OCI-LY7 (cell line): ENCODE measurements at regions of chr2 and their contacts with region 1.

Region 1: DNA sequence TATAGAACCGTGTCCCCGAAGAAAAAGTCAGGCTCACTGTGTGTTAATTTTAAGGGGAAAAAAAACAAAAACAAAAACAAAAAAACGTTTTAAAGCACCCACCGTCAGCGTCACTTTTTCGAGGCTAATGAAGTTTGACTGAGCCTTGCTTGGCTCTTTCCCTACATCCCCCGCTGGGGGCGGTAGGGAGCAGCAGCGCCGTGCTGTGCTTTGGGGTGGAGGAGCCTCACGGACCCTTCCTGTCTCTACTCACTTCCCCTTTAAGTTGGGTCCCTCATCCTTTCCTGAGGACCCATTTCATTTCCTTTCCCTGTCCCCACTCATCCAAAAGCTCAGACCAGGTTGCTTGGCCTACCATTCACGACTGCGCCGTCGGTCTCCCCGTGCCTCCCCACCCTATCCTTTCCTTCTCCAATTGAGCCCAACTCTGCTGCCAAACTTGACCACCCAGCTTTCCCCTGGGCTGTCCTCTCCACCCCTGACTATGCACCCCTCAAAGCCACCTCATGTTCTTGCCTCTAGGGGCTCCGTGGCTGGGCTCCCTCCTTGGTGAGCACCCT is 82.7 kb upstream of the RPL31 start:
- DNase-seq: peak; percentile 30
- H3K4me3 ChIP-seq: no peak overlapping the region
- H3K27ac ChIP-seq: no peak overlapping the region
- H3K4me1 ChIP-seq: no peaks in the 10 kb centered on the region
- CTCF ChIP-seq: peak; percentile 75

Region 2: DNA sequence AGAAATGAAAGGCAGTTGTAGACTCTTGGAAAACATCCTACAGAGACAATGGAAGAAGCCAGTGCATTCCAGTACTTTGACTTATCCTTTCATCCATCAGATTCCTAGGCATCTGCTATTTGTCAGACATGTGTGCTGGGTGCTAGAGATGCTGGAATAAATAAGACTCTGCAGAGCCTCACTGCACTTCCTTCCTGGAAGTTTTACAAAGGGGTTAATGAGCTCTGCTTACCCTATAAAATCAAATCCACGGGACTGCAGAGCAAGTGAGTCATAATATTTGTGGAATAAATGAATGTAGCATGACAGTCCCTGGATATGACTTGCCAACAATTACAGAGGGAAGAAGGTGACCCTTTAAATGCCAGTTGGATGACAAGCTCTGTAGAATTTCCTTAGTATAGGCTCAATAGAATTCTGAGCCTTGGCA is 152.2 kb before region 1 on chr2:
- CTCF ChIA-PET with region 1: no interaction called
- POLR2A ChIA-PET with region 1: no interaction called
- intact Hi-C with region 1: no loop called
- DNase-seq: no peak
- H3K4me3 ChIP-seq: no peak overlapping the region
- H3K27ac ChIP-seq: no peak overlapping the region
- H3K4me1 ChIP-seq: no peaks in the 10 kb centered on the region
- CTCF ChIP-seq: no peak

Region 3: GRCh38 chr2:100936070-100936741 is 16.8 kb after region 1 on chr2:
- CTCF ChIA-PET with region 1: no interaction called
- POLR2A ChIA-PET with region 1: interaction called, 10 read pairs
- intact Hi-C with region 1: no loop called
- DNase-seq: no peak
- H3K4me3 ChIP-seq: no peak overlapping the region
- H3K27ac ChIP-seq: no peak overlapping the region
- H3K4me1 ChIP-seq: no peaks in the 10 kb centered on the region
- CTCF ChIP-seq: no peak

Region 4: DNA sequence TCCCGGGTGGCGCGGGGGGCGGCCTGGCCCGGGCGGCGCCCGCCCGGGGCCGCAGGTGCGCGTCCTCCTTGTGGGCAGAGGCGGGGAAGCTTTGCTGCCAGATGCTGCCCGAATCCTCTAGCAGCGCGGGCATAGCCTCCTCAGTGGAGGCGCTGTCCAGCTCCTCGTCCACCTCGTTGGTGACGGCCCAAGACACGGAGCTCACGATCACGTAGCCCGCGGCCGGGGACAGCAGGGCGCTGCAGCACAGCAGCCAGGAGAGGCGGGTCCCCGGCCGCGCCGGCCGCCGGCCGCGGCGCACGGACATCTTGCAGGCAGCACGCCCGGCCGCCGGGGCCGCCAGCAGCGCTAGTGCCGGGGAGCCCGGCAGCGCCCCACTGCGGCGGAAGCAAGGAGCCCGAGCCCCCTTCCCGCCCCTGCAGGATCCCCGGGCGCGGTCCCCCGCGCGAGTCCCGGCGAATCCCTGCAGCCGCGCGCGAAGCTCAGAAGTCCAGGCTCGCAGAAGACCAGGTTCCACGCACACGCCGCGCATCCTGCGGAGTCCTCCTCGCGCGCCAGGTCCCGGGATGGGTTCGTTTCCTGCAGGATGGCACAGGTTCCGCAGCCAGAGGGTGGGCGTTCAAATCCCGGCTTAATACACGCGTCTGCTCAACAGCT is 467.9 kb after region 1 on chr2 and contains the start of gene CREG2:
- CTCF ChIA-PET with region 1: no interaction called
- POLR2A ChIA-PET with region 1: no interaction called
- intact Hi-C with region 1: no loop called
- DNase-seq: no peak
- H3K4me3 ChIP-seq: no peak within 1 kb of the TSS
- H3K27ac ChIP-seq: no peak within 1 kb of the TSS
- H3K4me1 ChIP-seq: no peaks in the 10 kb centered on the region
- CTCF ChIP-seq: no peak
- total RNA-seq, gene CREG2: not detected in 2 replicates